ENCODE measurements at regions of chr1 and their contacts with region 1.

Region 1: GRCh38 chr1:21368515-21369289 is 71.2 kb upstream of the NBPF3 start:
- DNase-seq: peak; percentile 81 to 84
- H3K4me3 ChIP-seq: no peak overlapping the region
- H3K27ac ChIP-seq: no peak overlapping the region
- H3K4me1 ChIP-seq: no peaks in the 10 kb centered on the region
- H3K27me3 ChIP-seq: no peaks in the 10 kb centered on the region
- CTCF ChIP-seq: peak; percentile 100
- POLR2A ChIP-seq: peak in 1 of 2 donors; percentile 9

Region 2: GRCh38 chr1:21232044-21232443 is 136.7 kb before region 1 on chr1:
- intact Hi-C with region 1: loop called (anchors 5 kb)
- DNase-seq: peak in 1 of 2 donors; percentile 67
- H3K4me3 ChIP-seq: no peak overlapping the region
- H3K27ac ChIP-seq: no peak overlapping the region
- H3K4me1 ChIP-seq: no peaks in the 10 kb centered on the region
- H3K27me3 ChIP-seq: no peaks in the 10 kb centered on the region
- CTCF ChIP-seq: peak; percentile 72 to 88 (median 81)
- POLR2A ChIP-seq: no peak

Region 3: GRCh38 chr1:21255278-21255942 is 113.3 kb before region 1 on chr1:
- intact Hi-C with region 1: loop called (anchors 5 kb)
- DNase-seq: peak; percentile 89 to 91
- H3K4me3 ChIP-seq: no peak overlapping the region
- H3K27ac ChIP-seq: peak overlapping the region; percentile 26 to 31
- H3K4me1 ChIP-seq: no peaks in the 10 kb centered on the region
- H3K27me3 ChIP-seq: no peaks in the 10 kb centered on the region
- CTCF ChIP-seq: peak; percentile 86 to 93 (median 92)
- POLR2A ChIP-seq: no peak

Region 4: DNA sequence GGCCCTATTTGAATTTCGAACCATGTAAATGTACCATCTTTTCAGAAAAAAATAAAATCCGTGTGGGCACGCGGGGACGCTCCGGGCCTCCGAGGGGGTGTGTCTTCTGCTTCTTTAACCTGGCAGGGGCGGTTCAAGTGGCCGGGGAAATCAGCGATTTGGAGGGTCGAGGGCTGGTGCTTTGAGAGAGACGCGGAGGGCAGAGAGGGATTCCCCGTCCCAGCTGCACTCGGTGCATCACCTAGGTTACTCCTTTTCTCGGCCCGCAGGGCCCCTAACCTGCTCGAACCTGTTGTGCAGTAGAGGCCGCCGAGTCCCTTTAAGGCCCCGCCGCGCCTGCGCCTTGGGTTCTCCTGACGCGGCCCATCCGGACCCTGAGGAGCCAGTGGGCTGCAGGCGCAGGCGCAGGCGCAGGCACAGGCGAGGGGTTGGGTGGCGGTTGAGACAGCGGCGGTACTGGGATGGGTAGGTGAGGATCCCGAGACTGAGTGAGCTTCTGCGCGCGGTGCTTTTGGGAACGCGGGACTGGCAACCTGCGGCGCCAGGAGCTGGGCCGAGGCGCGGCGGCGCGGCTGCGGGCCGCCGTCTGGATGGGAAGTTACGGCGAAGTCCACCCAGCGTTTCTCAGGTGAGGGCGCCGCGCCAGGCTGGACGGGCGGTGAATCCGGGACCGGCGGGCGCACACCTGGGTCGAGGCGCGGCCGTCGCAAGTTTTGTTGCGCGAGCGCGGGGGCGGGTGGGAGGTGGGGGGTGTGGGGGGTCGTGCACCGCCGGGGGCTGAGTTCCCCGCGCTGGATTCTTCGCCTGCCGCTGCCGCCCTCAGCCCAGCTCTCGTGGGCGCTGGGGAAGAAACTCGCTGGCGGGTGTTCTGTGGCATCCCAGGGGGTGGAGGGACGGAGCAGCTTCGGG is 71.3 kb after region 1 on chr1 and contains the start of gene NBPF3:
- intact Hi-C with region 1: no loop called
- DNase-seq: peak; percentile 85 to 86
- H3K4me3 ChIP-seq: peak within 1 kb of the TSS; percentile 52 to 79
- H3K27ac ChIP-seq: peak within 1 kb of the TSS; percentile 64 to 69
- H3K4me1 ChIP-seq: no peaks in the 10 kb centered on the region
- H3K27me3 ChIP-seq: no peaks in the 10 kb centered on the region
- CTCF ChIP-seq: peak in 1 of 4 experiments; percentile 11
- POLR2A ChIP-seq: peak; percentile 52 to 78
- total RNA-seq, gene NBPF3: 3.8 to 23.0 (median 6.7) TPM

Measured in uterus (tissue), 4 donors.